Left lung (tissue), 14 donors: ENCODE measurements at regions of chr1 and their contacts with region 1.

Region 1: GRCh38 chr1:244796718-244797406 is 38.6 kb upstream of the COX20 start:
- DNase-seq: peak in 2 of 4 donors; percentile 72 to 76
- ATAC-seq: peak; percentile 93
- H3K4me3 ChIP-seq: no peak overlapping the region
- H3K27ac ChIP-seq: no peak overlapping the region
- H3K4me1 ChIP-seq: no peaks in the 10 kb centered on the region
- H3K27me3 ChIP-seq: no peaks in the 10 kb centered on the region
- CTCF ChIP-seq: peak; percentile 81 to 89

Region 2: DNA sequence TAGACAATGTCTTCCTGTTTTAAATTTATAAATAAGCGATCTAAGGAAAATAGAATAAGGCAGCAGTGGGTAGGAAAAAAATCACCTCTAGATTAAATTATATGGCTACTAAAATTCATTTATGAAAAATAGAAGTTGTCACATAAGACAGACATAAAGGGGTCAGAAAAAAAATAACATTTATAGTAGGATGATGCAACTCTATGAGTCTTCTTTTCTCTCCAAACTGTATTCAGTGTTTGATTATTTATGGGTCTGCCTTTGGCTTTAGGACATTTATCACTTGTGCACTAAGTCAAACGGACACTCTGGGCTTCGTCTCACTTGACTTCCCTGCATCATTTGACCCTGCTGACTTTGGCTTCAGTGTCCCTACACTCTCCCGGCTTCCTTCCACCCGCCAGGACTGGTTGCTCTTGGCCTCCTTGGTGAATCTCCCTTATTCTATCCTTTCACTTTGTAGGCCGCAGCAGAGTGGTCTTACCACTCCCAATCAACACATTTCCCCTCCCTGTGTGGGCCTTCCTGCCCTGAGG is 191.0 kb before region 1 on chr1:
- intact Hi-C with region 1: loop called in 1 of 2 experiments (anchors 5 kb)
- DNase-seq: no peak
- ATAC-seq: no peak
- H3K4me3 ChIP-seq: no peak overlapping the region
- H3K27ac ChIP-seq: no peak overlapping the region
- H3K4me1 ChIP-seq: no peaks in the 10 kb centered on the region
- H3K27me3 ChIP-seq: no peaks in the 10 kb centered on the region
- CTCF ChIP-seq: no peak

Region 3: DNA sequence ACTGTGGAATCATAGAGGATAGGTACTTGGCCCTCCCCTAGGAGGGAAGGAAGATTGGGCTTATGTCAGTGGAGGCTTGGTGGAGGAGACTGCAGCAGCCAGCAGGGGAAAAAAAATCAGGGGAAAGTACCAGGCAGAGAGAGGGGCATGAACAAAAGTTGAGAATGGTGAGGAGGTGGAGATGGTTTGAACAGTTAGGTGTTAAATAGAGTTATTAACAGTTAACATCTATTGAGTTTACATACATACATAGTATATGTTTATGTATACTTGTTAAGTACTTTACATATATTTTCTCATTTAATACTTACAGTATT is 204.0 kb after region 1 on chr1:
- intact Hi-C with region 1: no loop called
- DNase-seq: no peak
- ATAC-seq: no peak
- H3K4me3 ChIP-seq: no peak overlapping the region
- H3K27ac ChIP-seq: no peak overlapping the region
- H3K4me1 ChIP-seq: no peaks in the 10 kb centered on the region
- H3K27me3 ChIP-seq: no peaks in the 10 kb centered on the region
- CTCF ChIP-seq: no peak

Region 4: GRCh38 chr1:245045087-245045881 is 248.4 kb after region 1 on chr1:
- intact Hi-C with region 1: loop called in 1 of 2 experiments (anchors 5 kb)
- DNase-seq: no peak
- ATAC-seq: peak; percentile 7
- H3K4me3 ChIP-seq: no peak overlapping the region
- H3K27ac ChIP-seq: no peak overlapping the region
- H3K4me1 ChIP-seq: peaks cover 0 to 4% of the 10 kb centered on the region in 2 donors
- H3K27me3 ChIP-seq: no peaks in the 10 kb centered on the region
- CTCF ChIP-seq: no peak